Breast epithelium (tissue), 4 donors: ENCODE measurements at regions of chr18 and their contacts with region 1.

Region 1: DNA sequence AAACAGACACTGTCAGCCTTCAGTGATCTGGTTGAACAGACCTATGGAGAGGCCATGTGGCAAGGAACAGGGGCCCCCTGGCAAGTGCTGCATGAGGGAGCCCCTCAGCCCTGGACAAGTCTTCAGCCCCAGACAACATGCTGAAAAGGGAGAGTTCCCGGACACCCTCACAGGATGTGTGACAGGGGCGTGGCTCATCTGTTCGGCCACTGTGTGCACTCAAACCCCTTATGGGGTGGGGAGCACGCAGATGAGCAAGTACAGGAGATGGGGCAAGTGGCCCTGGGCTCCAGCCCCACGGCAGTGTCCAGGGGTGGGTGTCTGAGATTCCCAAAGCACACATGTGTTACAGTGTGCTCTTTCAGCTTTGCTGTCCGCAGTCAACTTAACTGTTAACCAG is 35.4 kb upstream of the MPPE1 start:
- DNase-seq: no peak
- H3K4me3 ChIP-seq: no peak overlapping the region
- H3K27ac ChIP-seq: no peak overlapping the region
- H3K4me1 ChIP-seq: no peaks in the 10 kb centered on the region
- H3K27me3 ChIP-seq: no peaks in the 10 kb centered on the region
- CTCF ChIP-seq: no peak
- POLR2A ChIP-seq: no peak

Region 2: GRCh38 chr18:11980555-11981382 is 37.2 kb after region 1 on chr18:
- intact Hi-C with region 1: loop called (anchors 5 kb)
- DNase-seq: peak; percentile 98 to 99
- H3K4me3 ChIP-seq: peak overlapping the region; percentile 69 to 86 (median 76)
- H3K27ac ChIP-seq: peak overlapping the region; percentile 92 to 95
- H3K4me1 ChIP-seq: peaks cover 2 to 6% of the 10 kb centered on the region in 2 donors
- H3K27me3 ChIP-seq: no peaks in the 10 kb centered on the region
- CTCF ChIP-seq: no peak
- POLR2A ChIP-seq: peak; percentile 59